ENCODE measurements at regions of chr14 and their contacts with region 1.

Region 1: DNA sequence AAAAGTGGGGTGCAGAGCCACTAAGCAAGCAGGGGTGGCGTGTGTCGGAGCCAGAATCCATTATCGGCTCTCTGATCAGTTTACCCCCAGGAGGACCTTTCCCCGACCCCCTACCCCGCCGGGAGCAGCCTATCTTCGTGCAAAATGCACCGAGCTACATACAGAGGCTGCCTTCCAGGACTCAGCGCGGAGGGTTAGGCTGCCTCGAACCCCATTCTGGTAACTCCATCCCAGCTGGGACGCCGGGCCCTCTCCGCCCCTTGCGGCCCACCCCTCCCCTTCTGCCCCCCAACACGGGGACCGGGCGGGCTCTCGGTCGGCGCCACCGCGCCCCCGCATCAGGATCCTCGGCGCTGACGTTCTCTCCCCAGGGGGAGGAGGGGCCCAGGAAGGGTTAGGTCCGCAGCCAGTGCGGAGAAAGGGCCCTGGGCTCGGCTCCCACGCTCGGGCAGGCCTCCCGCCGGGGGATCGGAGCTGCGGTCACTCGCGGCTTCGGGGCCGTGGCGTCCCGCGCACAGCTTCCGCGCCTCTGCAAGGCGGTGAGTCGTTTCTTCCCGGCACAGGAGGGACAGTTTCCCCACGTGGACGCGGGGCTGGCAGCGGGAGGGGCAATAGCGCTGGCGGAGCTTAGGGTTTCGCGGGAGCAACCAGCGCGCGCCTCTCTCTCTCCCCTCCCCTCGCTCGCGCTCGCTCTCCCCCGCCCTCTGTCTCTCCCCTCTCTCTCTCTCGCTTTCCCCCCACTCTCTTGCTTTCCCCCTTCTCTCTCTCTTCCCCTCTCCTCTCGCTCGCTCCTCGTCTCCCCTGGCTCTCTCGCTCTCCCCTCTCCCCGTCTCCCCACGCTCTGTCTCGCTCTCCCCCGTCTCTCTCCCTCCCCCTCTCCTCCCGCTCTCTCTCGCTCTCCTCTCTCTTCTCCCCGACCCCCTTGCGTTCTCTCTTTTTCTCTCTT is 12.5 kb upstream of the MAP3K9 start:
- DNase-seq: peak; percentile 82
- H3K4me3 Mint-ChIP-seq: peak overlapping the region; percentile 79
- H3K27ac Mint-ChIP-seq: peak overlapping the region; percentile 53
- H3K4me1 Mint-ChIP-seq: peaks cover 20% of the 10 kb centered on the region
- H3K27me3 Mint-ChIP-seq: peaks cover 24% of the 10 kb centered on the region

Region 2: DNA sequence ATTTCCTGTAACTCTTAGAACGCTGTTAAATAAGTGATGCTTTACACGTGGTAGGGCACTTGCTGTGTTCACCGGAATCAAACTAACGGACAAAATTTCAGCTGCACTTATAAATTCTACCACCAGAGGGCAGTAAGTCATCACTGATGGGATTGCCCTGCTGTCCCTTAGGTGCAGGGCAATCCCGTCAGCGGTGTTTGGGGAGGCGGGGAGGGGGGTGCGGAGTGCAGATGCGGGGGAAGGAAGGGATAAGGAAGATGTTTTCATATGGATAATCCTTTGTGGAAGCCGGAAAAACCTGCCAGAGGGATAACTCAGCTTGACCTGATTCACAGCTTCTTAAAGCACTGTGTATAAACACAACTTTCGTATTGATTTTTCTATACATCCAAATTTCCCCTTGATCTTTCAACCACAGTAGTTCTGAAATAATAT is 1003.1 kb before region 1 on chr14:
- CTCF ChIA-PET with region 1: no interaction called
- intact Hi-C with region 1: loop called (anchors 1 kb)
- DNase-seq: peak; percentile 67
- H3K4me3 Mint-ChIP-seq: no peak overlapping the region
- H3K27ac Mint-ChIP-seq: no peak overlapping the region
- H3K4me1 Mint-ChIP-seq: peaks cover 2% of the 10 kb centered on the region
- H3K27me3 Mint-ChIP-seq: peaks cover 2% of the 10 kb centered on the region

Region 3: DNA sequence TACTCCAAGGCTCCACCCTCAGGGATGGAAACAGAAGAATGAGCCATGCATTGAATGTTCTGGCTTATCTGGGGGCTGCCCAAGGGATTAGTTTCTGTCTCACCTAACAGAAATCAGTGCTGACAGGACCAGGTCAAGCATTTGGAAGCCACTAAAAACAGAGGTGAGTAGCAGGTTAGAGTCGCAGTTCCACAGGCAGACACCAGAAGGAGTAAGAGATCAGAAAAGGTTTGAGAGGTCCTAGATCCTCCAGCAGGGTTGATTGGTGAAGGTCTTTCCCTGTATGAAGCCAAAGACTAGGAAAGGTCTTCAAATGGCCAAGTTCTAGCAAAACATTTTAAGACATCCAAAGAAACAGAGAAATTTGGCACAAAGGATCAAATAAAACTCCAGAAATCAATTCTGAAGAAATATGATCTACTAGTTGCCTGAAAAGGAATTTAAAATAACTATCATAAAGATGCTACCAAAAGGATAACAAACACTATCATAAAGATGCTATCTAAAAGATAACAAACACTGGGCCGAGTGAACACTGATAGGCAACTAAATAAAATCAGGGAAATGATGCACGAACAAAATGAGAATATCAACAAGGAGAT is 199.6 kb before region 1 on chr14:
- CTCF ChIA-PET with region 1: interaction called, 10 read pairs
- intact Hi-C with region 1: loop called (anchors 1 kb)
- DNase-seq: peak; percentile 72
- H3K4me3 Mint-ChIP-seq: no peak overlapping the region
- H3K27ac Mint-ChIP-seq: no peak overlapping the region
- H3K4me1 Mint-ChIP-seq: no peaks in the 10 kb centered on the region
- H3K27me3 Mint-ChIP-seq: no peaks in the 10 kb centered on the region

Region 4: DNA sequence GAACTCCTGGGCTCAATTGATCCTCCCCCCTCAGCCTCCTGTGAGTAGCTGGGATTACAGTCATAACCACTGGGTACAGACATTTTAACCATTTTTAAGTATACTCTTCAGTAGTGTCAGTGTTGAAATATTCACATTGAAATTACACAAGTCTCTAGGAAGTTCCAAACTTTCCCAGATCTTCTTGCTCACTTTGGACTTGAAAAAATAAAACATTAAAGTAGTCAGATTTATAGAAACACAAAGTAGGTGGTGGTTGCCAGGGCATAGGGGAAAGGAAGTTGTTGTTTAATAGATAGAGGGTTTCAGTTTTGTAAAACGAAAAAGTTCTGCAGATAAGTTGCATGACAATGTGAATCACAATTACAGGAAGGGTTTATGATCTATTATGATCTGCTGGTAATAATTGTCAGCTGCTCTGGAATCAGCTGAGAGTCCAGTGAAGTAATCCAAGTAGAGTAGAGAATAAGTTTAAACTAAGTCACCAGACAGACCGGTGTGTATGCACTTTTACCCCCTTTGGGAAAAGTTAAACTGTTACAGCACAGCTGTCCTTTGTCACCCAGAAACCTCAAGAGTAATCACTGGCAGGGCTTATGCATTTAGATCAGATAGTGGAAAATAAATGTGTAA is 112.8 kb after region 1 on chr14:
- CTCF ChIA-PET with region 1: interaction called, 10 read pairs
- intact Hi-C with region 1: no loop called
- DNase-seq: peak; percentile 37
- H3K4me3 Mint-ChIP-seq: peak overlapping the region; percentile 56
- H3K27ac Mint-ChIP-seq: peak overlapping the region; percentile 84
- H3K4me1 Mint-ChIP-seq: peaks cover 72% of the 10 kb centered on the region
- H3K27me3 Mint-ChIP-seq: no peaks in the 10 kb centered on the region

Region 5: GRCh38 chr14:70972107-70972976 is 150.5 kb after region 1 on chr14:
- CTCF ChIA-PET with region 1: interaction called, 21 read pairs
- intact Hi-C with region 1: loop called (anchors 1 kb)
- DNase-seq: peak; percentile 95
- H3K4me3 Mint-ChIP-seq: no peak overlapping the region
- H3K27ac Mint-ChIP-seq: peak overlapping the region; percentile 33
- H3K4me1 Mint-ChIP-seq: peaks cover 30% of the 10 kb centered on the region
- H3K27me3 Mint-ChIP-seq: no peaks in the 10 kb centered on the region

Measured in activated naive CD4-positive, alpha-beta T cell treated with anti-CD3 and anti-CD28 coated beads for 36 hours (primary cell).